PC-3 (cell line): ENCODE measurements at regions of chr16 and their contacts with region 1.

Region 1: GRCh38 chr16:19210280-19210924 is 42.4 kb downstream of the SYT17 start:
- DNase-seq: peak; percentile 68
- ATAC-seq: peak; percentile 85
- H3K4me3 ChIP-seq: no peak overlapping the region
- H3K27ac ChIP-seq: peak overlapping the region; percentile 33
- H3K4me1 ChIP-seq: peaks cover 11% of the 10 kb centered on the region
- H3K27me3 ChIP-seq: no peaks in the 10 kb centered on the region
- CTCF ChIP-seq: no peak

Region 2: DNA sequence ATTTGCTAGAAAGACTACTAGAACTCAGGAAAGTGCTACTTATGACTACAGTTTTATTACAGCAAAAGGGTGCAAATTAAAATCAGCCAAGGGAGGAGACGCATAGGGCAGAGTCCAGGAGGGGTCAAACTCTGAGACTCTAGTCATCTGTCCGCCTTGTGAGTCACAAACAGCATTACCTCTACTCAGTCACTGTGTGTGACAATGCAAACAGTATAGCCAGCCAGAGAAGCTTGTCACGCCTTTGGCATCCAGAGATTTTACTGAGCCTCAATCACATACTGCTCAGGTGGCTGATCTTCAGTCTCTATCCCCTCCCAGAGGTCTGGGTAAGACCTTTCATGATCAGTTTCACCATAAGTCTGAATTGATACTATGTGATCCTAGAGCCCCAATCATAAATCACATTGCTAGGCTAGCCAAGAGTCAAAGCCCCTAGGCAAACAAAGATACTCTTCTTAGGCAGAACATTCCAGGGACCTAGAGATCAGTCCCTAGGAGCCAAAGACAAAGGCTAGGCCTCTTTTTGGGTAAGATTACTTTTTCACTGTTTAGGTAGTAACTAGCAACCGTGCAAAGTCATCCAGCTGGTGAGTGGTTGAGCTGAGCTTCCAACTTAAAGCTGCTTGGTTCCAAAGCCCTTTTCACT is 26.3 kb after region 1 on chr16:
- CTCF ChIA-PET with region 1: no interaction called
- POLR2A ChIA-PET with region 1: no interaction called
- intact Hi-C with region 1: loop called (anchors 1 kb)
- DNase-seq: peak; percentile 82
- ATAC-seq: peak; percentile 98
- H3K4me3 ChIP-seq: no peak overlapping the region
- H3K27ac ChIP-seq: peak overlapping the region; percentile 72
- H3K4me1 ChIP-seq: peaks cover 15% of the 10 kb centered on the region
- H3K27me3 ChIP-seq: no peaks in the 10 kb centered on the region
- CTCF ChIP-seq: no peak